A673 (cell line): ENCODE measurements at regions of chr11 and their contacts with region 1.

Region 1: DNA sequence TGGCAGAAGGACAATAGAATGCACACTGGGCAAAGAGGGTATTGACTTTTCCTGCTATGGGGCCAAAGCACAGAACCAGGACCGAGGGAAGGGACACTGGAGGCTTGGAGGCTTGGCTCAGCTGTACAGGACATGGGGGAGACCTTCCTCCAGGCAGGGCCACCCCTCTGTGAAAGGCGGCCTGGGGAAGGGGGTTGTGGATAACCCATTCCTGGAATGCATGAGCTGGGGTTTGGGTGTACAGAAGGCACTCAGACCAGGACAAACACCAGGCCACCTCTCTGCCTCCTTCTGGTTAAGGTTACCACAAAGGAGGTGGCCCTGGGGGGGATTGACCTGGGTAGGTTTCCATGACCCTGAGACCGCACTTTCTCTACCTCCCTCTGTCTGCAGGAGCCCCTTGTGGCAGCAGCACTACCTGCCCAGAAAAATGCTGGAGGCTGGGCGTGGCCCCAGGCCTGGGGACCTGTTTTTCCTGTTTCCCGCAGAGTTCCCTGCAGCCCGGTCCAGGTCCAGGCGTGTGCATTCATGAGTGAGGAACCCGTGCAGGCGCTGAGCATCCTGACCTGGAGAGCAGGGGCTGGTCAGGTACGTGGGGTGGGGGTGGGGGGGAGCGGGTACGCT is 9.6 kb downstream of the P2RY2 start:
- DNase-seq: no peak
- H3K4me3 ChIP-seq: no peak overlapping the region
- H3K27ac ChIP-seq: no peak overlapping the region
- H3K4me1 ChIP-seq: no peaks in the 10 kb centered on the region
- H3K27me3 ChIP-seq: no peaks in the 10 kb centered on the region
- CTCF ChIP-seq: no peak

Region 2: GRCh38 chr11:72786393-72786866 is 441.3 kb before region 1 on chr11:
- CTCF ChIA-PET with region 1: interaction called, 28 read pairs
- POLR2A ChIA-PET with region 1: no interaction called
- intact Hi-C with region 1: no loop called
- DNase-seq: no peak
- H3K4me3 ChIP-seq: no peak overlapping the region
- H3K27ac ChIP-seq: no peak overlapping the region
- H3K4me1 ChIP-seq: peaks cover 6% of the 10 kb centered on the region
- H3K27me3 ChIP-seq: no peaks in the 10 kb centered on the region
- CTCF ChIP-seq: no peak